T-cell (primary cell): ENCODE measurements at regions of chr13 and their contacts with region 1.

Region 1: GRCh38 chr13:97109841-97110492 is 112.2 kb upstream of the MBNL2 start:
- DNase-seq: peak; percentile 37 to 86 (median 71)
- ATAC-seq: peak; percentile 90 to 94 (median 92)
- H3K4me3 ChIP-seq: peak overlapping the region in 1 of 2 donors; percentile 5
- H3K4me3 Mint-ChIP-seq: peak overlapping the region in 1 of 3 donors; percentile 24
- H3K27ac ChIP-seq: no peak overlapping the region
- H3K27ac Mint-ChIP-seq: peak overlapping the region in 1 of 2 donors; percentile 59
- H3K4me1 ChIP-seq: peaks cover 0 to 14% of the 10 kb centered on the region in 2 experiments
- H3K4me1 Mint-ChIP-seq: peaks cover 13 to 19% (median 14%) of the 10 kb centered on the region in 3 donors
- H3K27me3 ChIP-seq: peaks cover 0 to 13% of the 10 kb centered on the region in 2 experiments
- H3K27me3 Mint-ChIP-seq: peaks cover 6 to 7% of the 10 kb centered on the region in 2 donors

Region 2: DNA sequence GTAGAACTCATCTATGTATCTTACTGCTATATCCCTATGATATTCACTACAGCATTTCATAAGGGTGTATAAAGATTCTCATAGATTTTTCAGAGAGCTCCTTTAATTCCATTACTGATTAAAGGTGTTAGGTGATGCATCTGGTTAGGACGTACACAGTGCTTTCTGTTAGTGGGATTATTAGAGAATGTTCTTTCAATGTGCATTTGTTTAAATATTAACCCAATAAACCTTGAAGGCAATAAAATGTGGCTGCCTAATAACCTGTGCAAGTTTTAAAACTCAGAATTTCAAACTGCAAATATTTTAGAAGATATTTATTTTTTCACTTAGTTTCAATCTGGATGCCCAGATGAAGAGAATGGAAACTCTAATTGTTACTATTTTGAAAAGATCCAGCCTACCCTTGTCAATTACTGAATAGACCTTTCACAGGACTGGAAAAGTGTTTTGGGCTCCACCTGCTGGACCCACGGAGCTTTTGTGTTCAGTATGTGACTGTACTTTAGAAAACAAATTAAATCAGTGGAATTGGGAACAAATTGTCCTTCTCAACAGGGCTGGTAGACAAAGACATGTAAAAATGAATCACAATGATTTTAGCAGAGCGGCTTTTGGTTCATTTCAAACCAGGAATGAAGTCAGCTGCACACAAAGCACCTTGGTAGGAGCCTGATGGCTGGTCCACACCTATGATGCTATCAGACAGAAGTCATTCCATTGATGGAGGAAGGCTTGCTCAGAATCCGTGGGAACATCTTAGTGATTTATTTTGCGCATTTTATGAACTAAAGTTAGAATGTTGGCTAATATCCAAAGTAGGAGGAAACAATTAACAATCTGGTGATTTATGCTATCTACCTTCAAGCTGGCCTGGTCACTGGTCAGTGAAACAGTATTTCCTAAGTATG is 234.6 kb after region 1 on chr13:
- CTCF ChIA-PET with region 1: interaction called, 13 to 17 read pairs
- POLR2A ChIA-PET with region 1: no interaction called
- DNase-seq: peak in 30 of 35 experiments; percentile 7 to 62 (median 32)
- ATAC-seq: peak in 2 of 4 experiments; percentile 45 to 62
- H3K4me3 ChIP-seq: no peak overlapping the region
- H3K4me3 Mint-ChIP-seq: no peak overlapping the region
- H3K27ac ChIP-seq: no peak overlapping the region
- H3K27ac Mint-ChIP-seq: no peak overlapping the region
- H3K4me1 ChIP-seq: peaks cover 0 to 5% of the 10 kb centered on the region in 2 experiments
- H3K4me1 Mint-ChIP-seq: peaks cover 0 to 7% (median 2%) of the 10 kb centered on the region in 3 donors
- H3K27me3 ChIP-seq: no peaks in the 10 kb centered on the region
- H3K27me3 Mint-ChIP-seq: no peaks in the 10 kb centered on the region

Region 3: GRCh38 chr13:97359181-97360057 is 249.5 kb after region 1 on chr13:
- CTCF ChIA-PET with region 1: interaction called, 75 to 128 read pairs
- POLR2A ChIA-PET with region 1: no interaction called
- DNase-seq: peak in 32 of 35 experiments; percentile 6 to 81 (median 30)
- ATAC-seq: peak; percentile 84 to 90 (median 84)
- H3K4me3 ChIP-seq: no peak overlapping the region
- H3K4me3 Mint-ChIP-seq: no peak overlapping the region
- H3K27ac ChIP-seq: no peak overlapping the region
- H3K27ac Mint-ChIP-seq: no peak overlapping the region
- H3K4me1 ChIP-seq: no peaks in the 10 kb centered on the region
- H3K4me1 Mint-ChIP-seq: peaks cover 0 to 3% (median 0%) of the 10 kb centered on the region in 3 donors
- H3K27me3 ChIP-seq: no peaks in the 10 kb centered on the region
- H3K27me3 Mint-ChIP-seq: no peaks in the 10 kb centered on the region

Region 4: DNA sequence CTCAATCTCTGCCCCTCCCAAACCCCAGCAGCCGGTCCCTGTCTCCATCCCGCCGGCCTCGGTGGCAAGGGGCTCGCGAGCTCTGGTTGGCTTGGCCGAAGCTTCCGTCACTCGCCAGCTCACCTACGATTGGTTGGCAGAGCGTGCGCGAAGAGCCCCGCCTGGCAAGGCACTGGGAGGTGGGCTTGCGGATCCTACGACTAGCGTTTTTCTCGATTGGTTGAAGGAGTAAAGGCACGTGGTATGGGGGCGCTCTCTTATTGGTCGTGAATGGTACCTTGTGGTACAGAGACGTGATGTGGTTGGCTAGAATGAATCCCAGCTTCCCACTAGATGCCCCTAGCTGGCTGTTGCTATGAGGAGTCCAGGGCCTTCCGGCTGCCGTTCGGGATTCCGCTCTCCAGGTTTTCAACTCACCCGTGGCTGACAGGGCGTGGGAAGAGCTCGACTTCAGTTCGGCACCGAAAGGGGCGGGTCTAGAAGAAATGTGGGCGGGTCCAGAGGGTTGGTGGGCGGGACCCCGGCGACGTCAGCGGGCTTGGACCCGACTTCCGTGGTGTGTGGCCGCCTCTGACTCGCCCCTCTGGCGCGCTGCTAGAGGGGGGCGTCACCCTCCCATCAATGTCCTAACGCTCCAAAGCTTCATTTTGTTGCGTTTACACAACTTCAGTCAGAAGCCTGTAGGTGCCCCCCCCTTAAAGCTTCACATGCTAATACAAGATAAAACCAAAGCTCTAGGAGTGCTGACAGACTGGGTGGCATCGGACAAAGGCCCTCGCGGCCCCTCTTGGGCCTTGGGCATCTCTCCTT is 323.2 kb after region 1 on chr13:
- CTCF ChIA-PET with region 1: interaction called in 1 of 2 experiments, 14 read pairs
- POLR2A ChIA-PET with region 1: no interaction called
- DNase-seq: peak; percentile 92 to 100 (median 97)
- ATAC-seq: peak; percentile 74 to 79 (median 74)
- H3K4me3 ChIP-seq: peak overlapping the region; percentile 82 to 97
- H3K4me3 Mint-ChIP-seq: peak overlapping the region; percentile 92 to 97 (median 93)
- H3K27ac ChIP-seq: peak overlapping the region; percentile 98
- H3K27ac Mint-ChIP-seq: peak overlapping the region; percentile 99 to 100
- H3K4me1 ChIP-seq: peaks cover 2 to 21% of the 10 kb centered on the region in 2 experiments
- H3K4me1 Mint-ChIP-seq: peaks cover 31 to 35% (median 34%) of the 10 kb centered on the region in 3 donors
- H3K27me3 ChIP-seq: no peaks in the 10 kb centered on the region
- H3K27me3 Mint-ChIP-seq: peaks cover 5 to 7% of the 10 kb centered on the region in 2 donors